T-cell (primary cell): ENCODE measurements at regions of chr4 and their contacts with region 1.

Region 1: GRCh38 chr4:39732728-39733127 is 34.8 kb downstream of the UBE2K start:
- DNase-seq: no peak
- ATAC-seq: no peak
- H3K4me3 ChIP-seq: no peak overlapping the region
- H3K4me3 Mint-ChIP-seq: no peak overlapping the region
- H3K27ac ChIP-seq: no peak overlapping the region
- H3K27ac Mint-ChIP-seq: no peak overlapping the region
- H3K4me1 ChIP-seq: no peaks in the 10 kb centered on the region
- H3K4me1 Mint-ChIP-seq: peaks cover 26 to 33% (median 26%) of the 10 kb centered on the region in 3 donors
- H3K27me3 ChIP-seq: no peaks in the 10 kb centered on the region
- H3K27me3 Mint-ChIP-seq: no peaks in the 10 kb centered on the region

Region 2: GRCh38 chr4:39718366-39719323 is 14.1 kb before region 1 on chr4:
- CTCF ChIA-PET with region 1: interaction called in 1 of 2 experiments, 10 read pairs
- POLR2A ChIA-PET with region 1: interaction called, 6 to 8 read pairs
- DNase-seq: peak in 1 of 35 experiments; percentile 28
- ATAC-seq: peak; percentile 55 to 77 (median 64)
- H3K4me3 ChIP-seq: no peak overlapping the region
- H3K4me3 Mint-ChIP-seq: peak overlapping the region in 2 of 3 donors; percentile 26 to 77
- H3K27ac ChIP-seq: no peak overlapping the region
- H3K27ac Mint-ChIP-seq: peak overlapping the region; percentile 29 to 39
- H3K4me1 ChIP-seq: peaks cover 2 to 26% of the 10 kb centered on the region in 2 experiments
- H3K4me1 Mint-ChIP-seq: peaks cover 55 to 70% (median 68%) of the 10 kb centered on the region in 3 donors
- H3K27me3 ChIP-seq: no peaks in the 10 kb centered on the region
- H3K27me3 Mint-ChIP-seq: no peaks in the 10 kb centered on the region

Region 3: DNA sequence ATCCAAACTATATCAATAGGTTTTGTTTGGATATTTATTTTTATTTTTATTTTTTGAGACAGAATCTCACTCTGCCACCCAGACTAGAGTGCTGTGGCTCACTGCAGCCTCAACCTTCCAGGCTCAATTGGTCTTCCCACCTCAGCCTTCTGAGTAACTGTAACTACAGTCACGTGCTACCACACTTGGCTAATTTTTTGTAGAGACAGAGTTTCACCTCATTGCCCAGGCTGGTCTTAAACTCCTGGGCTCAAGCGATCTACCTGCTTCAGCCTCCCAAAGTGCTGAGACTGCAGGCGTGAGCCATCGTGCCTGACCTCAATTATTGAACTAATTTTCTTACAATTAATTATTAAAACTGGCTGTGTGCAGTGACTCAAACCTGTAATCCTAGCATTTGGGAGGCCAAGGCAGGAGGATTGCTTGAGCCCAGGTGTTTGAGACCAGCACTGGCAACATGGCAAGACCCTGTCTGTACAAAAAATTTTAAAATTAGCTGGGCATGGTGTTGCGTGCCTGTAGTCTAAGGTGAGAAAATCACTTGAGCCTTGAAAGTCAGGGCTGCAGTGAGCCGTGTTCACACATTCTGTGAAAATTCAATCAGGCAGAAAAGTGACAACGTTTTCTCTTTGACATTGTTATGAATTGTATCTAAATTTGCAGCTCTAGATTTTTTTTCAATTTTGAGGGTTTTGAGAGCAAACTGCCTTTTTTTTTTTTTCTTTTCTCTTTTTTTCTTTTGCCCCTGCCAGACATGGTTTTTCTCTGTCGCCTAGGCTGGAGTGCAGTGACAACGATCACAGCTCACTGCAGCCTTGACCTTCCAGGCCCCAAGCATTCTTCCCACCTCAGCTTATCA is 31.2 kb after region 1 on chr4:
- CTCF ChIA-PET with region 1: interaction called, 3 to 10 read pairs
- POLR2A ChIA-PET with region 1: no interaction called
- DNase-seq: no peak
- ATAC-seq: no peak
- H3K4me3 ChIP-seq: no peak overlapping the region
- H3K4me3 Mint-ChIP-seq: no peak overlapping the region
- H3K27ac ChIP-seq: no peak overlapping the region
- H3K27ac Mint-ChIP-seq: no peak overlapping the region
- H3K4me1 ChIP-seq: no peaks in the 10 kb centered on the region
- H3K4me1 Mint-ChIP-seq: no peaks in the 10 kb centered on the region
- H3K27me3 ChIP-seq: no peaks in the 10 kb centered on the region
- H3K27me3 Mint-ChIP-seq: no peaks in the 10 kb centered on the region